Stomach (tissue), 19 donors: ENCODE measurements at regions of chr6 and their contacts with region 1.

Region 1: DNA sequence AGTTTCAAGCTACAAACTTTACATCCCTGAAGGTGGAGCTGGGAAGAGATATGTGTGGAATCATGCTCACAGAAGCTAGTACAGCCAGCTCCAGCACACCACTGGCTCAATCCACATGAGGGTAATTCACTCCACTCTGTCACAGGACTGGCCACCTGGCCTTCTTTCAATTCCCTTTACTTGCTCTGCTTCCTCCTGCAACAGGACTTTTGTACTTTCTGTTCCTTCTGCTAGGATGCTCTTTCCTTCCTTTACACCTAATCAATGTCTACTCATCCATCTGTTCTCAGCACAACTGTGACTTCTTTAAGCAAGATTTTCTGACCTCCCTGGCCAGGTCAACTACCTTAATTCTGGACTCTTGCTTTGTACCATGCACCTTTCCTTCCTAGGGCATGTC is 39.4 kb upstream of the MYB start:
- DNase-seq: peak in 1 of 2 donors; percentile 9
- H3K4me3 ChIP-seq: no peak overlapping the region
- H3K27ac ChIP-seq: no peak overlapping the region
- H3K4me1 ChIP-seq: no peaks in the 10 kb centered on the region
- H3K27me3 ChIP-seq: no peaks in the 10 kb centered on the region
- CTCF ChIP-seq: no peak
- EP300 ChIP-seq: no peak
- POLR2A ChIP-seq: no peak

Region 2: DNA sequence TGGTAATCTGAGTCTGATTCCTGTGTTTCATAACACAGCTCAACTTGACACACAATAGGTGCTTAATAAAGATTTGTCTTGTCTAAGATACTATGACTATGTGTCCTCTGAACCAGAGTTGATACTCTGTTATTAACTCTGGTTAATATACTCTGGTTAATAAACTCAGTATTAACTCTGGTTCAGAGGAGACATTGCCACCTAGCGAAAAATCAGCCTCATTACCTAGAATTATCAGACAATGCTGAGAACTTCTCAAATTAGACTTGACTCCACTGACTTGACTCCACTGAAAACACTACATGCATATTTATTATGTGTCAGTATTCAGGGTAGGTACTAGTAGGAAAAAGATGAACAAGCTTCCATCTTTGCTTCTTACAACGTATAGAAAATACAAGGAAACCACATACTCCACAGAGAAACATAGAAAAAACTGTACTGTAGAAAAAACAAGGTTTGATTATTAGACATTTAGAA is 282.0 kb after region 1 on chr6:
- intact Hi-C with region 1: loop called (anchors 5 kb)
- DNase-seq: peak in 1 of 2 donors; percentile 66
- H3K4me3 ChIP-seq: no peak overlapping the region
- H3K27ac ChIP-seq: no peak overlapping the region
- H3K4me1 ChIP-seq: peaks cover 0 to 4% (median 0%) of the 10 kb centered on the region in 4 donors
- H3K27me3 ChIP-seq: no peaks in the 10 kb centered on the region
- CTCF ChIP-seq: peak in 5 of 7 experiments; percentile 25 to 62 (median 51)
- EP300 ChIP-seq: no peak
- POLR2A ChIP-seq: no peak